ENCODE measurements at regions of chr12 and their contacts with region 1.

Region 1: DNA sequence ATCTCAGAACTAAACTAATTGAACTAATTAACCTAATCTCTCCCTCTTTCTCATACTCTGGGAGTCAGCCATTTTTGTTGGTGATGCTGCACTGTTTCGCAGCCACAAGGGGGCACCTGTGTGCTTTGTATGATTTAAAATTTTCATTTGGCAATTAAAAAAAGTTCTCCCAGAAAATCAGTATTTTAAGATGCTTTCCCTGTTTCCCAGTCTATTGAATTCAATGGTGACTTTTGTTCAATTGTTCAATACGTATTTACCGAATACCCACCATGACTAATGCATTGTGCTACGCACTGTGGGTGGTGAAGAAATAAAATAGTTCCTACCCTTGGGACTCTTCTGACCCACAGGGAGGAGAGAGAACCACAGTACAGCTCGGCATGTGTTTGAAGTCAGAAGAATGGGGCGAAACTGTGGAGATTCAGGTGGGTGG is 63.7 kb downstream of the ZNF664 start:
- DNase-seq: peak; percentile 24
- ATAC-seq: peak; percentile 79
- H3K4me3 ChIP-seq: no peak overlapping the region
- H3K27ac ChIP-seq: peak overlapping the region; percentile 60
- H3K4me1 ChIP-seq: peaks cover 4% of the 10 kb centered on the region
- H3K27me3 ChIP-seq: no peaks in the 10 kb centered on the region
- CTCF ChIP-seq: peak; percentile 90

Region 2: DNA sequence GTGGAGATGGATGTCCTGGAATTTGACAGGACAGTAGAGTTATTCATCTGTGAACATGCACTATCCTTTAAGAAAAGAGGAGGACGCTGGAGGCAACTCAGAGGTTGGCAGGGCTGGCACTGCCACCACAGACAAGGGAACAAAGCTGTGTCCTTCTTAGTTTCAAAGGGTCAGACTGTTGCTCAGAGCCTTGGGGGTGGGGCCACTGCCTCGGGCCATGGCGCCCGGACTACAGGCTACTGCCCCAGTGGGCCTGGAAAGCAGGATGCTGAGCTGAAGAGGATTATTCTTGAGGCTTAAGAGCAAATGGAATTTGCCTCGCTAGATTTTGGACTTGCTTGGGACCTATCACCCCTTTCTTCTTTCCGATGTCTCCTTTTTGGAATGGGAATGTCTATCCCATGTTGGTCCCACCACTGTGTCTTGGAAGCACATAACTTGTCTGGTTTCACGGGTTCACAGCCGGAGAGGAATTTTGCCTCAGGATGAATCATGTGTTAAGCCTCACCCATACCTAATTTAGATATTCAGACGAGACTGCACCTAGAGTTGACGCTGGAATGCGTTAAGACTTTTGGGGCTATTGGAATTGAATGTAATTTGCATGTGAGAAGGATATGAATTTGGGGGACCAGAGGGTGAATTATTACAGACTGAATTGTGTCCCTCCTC is 143.4 kb after region 1 on chr12:
- CTCF ChIA-PET with region 1: no interaction called
- POLR2A ChIA-PET with region 1: no interaction called
- in situ Hi-C with region 1: no loop called
- intact Hi-C with region 1: no loop called
- DNase-seq: no peak
- ATAC-seq: no peak
- H3K4me3 ChIP-seq: no peak overlapping the region
- H3K27ac ChIP-seq: no peak overlapping the region
- H3K4me1 ChIP-seq: no peaks in the 10 kb centered on the region
- H3K27me3 ChIP-seq: no peaks in the 10 kb centered on the region
- CTCF ChIP-seq: no peak

Region 3: DNA sequence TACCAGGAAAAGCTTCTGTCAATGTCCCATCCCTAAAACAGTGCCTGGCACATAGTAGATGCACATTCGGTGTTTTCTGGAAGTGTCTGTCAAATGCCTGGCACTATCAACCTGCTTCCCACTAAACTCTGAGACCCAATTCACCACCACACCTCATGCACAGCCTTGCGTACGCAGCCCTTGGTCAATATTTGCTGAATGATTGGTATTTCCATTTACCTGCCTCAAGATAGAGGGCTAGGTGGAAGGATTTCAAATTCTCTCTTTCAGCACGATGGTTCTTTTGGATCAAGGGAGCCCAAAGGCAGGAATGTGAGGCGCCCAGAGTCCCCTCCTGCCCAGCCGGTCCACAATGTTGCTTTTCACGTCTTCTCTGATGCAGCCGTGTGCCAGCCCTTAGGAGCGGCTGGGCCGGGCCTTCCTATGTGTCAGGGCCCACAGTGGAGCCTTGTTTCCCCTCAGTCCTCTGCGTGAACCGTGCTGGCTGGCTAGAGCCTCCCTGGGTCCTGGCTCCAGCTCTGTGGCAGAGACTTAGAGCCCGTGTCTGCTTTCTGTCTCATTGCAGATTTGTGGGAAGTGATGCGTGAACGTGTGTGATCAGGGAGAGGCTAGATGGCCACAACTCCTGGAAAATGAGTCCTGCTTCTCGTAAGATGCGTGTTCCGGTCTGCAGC is 158.3 kb after region 1 on chr12:
- CTCF ChIA-PET with region 1: no interaction called
- POLR2A ChIA-PET with region 1: interaction called, 14 read pairs
- in situ Hi-C with region 1: no loop called
- intact Hi-C with region 1: no loop called
- DNase-seq: no peak
- ATAC-seq: no peak; the same call in 1 of the 2 replicates
- H3K4me3 ChIP-seq: no peak overlapping the region
- H3K27ac ChIP-seq: no peak overlapping the region
- H3K4me1 ChIP-seq: peaks cover 5% of the 10 kb centered on the region; the same call in 1 of the 2 replicates
- H3K27me3 ChIP-seq: no peaks in the 10 kb centered on the region
- CTCF ChIP-seq: no peak

Region 4: GRCh38 chr12:124321040-124321481 is 284.4 kb after region 1 on chr12:
- CTCF ChIA-PET with region 1: no interaction called
- POLR2A ChIA-PET with region 1: no interaction called
- in situ Hi-C with region 1: no loop called
- intact Hi-C with region 1: loop called (anchors 2 kb)
- DNase-seq: peak; percentile 39
- ATAC-seq: peak; percentile 88
- H3K4me3 ChIP-seq: no peak overlapping the region
- H3K27ac ChIP-seq: no peak overlapping the region
- H3K4me1 ChIP-seq: peaks cover 4% of the 10 kb centered on the region
- H3K27me3 ChIP-seq: no peaks in the 10 kb centered on the region
- CTCF ChIP-seq: peak; percentile 92

Region 5: DNA sequence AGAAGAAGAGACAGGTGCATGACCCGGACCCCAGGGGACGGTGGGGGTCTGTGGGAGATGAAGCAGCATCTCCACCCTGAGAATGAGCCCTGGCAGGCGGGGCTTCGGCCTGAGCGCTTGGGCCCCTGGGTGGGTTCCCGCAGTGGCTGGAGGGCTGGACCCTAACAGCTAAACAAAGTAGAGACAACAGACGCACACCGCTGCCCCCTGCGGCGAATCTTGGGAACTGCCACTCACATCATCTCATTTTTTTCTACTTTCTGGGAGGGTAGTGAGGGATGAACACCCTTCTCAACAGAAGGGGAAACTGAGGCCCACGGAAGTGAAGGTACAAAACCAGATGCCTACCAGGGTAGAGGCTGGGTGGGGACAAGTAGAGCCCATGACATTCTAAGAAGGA is 362.9 kb after region 1 on chr12:
- CTCF ChIA-PET with region 1: no interaction called
- POLR2A ChIA-PET with region 1: no interaction called
- in situ Hi-C with region 1: no loop called
- intact Hi-C with region 1: no loop called
- DNase-seq: no peak
- ATAC-seq: 0 out of 2 replicates have a peak, but pooled peaks have one; percentile 31
- H3K4me3 ChIP-seq: no peak overlapping the region
- H3K27ac ChIP-seq: no peak overlapping the region
- H3K4me1 ChIP-seq: peaks cover 68% of the 10 kb centered on the region
- H3K27me3 ChIP-seq: no peaks in the 10 kb centered on the region
- CTCF ChIP-seq: peak; percentile 90

Region 6: GRCh38 chr12:124767066-124767821 is 730.6 kb after region 1 on chr12:
- CTCF ChIA-PET with region 1: no interaction called
- POLR2A ChIA-PET with region 1: no interaction called
- in situ Hi-C with region 1: no loop called
- intact Hi-C with region 1: loop called (anchors 5 kb)
- DNase-seq: no peak
- ATAC-seq: peak; percentile 85
- H3K4me3 ChIP-seq: no peak overlapping the region
- H3K27ac ChIP-seq: 0 out of 2 replicates have a peak overlapping the region, but pooled peaks have one; percentile 3
- H3K4me1 ChIP-seq: peaks cover 32% of the 10 kb centered on the region
- H3K27me3 ChIP-seq: no peaks in the 10 kb centered on the region
- CTCF ChIP-seq: peak; percentile 98